Activated CD4-positive, alpha-beta T cell treated with anti-CD3 and anti-CD28 coated beads, Interleukin-2, amount 10 ng/mL, durations not matched to agents 24 days and 14 days (primary cell): ENCODE measurements at regions of chr12 and their contacts with region 1.

Region 1: DNA sequence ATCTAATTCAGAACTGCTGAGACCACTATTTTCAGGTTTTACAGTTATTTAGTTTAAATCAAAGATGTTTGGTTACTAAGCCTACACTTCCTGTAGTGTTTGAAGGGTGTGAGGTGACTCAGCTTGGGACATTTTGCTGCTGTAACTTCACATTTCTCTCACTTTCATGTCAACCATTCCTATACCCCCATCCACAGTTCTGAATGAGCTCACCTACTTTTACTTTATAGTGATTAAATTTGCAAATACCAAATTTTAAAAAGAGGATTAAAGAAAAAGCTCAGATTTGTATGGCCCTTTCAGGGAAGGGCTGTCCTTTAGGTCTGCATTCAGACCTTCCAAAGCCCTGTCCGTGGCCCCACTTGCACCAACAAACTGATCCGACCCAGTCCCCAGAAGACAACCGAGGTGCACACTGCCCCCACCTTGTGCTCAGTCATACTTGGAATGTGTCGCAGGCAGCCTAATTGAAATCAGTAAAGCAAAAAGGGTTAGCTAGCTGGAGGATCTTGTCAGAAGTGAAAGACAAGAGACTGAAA is 174.4 kb downstream of the MON2 start:
- DNase-seq: peak; percentile 70
- H3K4me3 Mint-ChIP-seq: peak overlapping the region; percentile 24
- H3K27ac Mint-ChIP-seq: peak overlapping the region; percentile 83
- H3K4me1 Mint-ChIP-seq: peaks cover 10% of the 10 kb centered on the region
- H3K27me3 Mint-ChIP-seq: peaks cover 15% of the 10 kb centered on the region

Region 2: GRCh38 chr12:62466594-62467491 is 174.1 kb before region 1 on chr12 and contains the start of gene MON2:
- intact Hi-C with region 1: loop called (anchors 1 kb)
- DNase-seq: peak; percentile 97
- H3K4me3 Mint-ChIP-seq: peak within 1 kb of the TSS; percentile 86
- H3K27ac Mint-ChIP-seq: peak within 1 kb of the TSS; percentile 93
- H3K4me1 Mint-ChIP-seq: peaks cover 19% of the 10 kb centered on the region
- H3K27me3 Mint-ChIP-seq: peaks cover 8% of the 10 kb centered on the region
- total RNA-seq, gene MON2: 32.8 and 36.4 TPM in 2 replicates

Region 3: GRCh38 chr12:62744551-62744950 is 103.6 kb after region 1 on chr12:
- intact Hi-C with region 1: no loop called
- DNase-seq: no peak
- H3K4me3 Mint-ChIP-seq: no peak overlapping the region
- H3K27ac Mint-ChIP-seq: no peak overlapping the region
- H3K4me1 Mint-ChIP-seq: peaks cover 3% of the 10 kb centered on the region
- H3K27me3 Mint-ChIP-seq: peaks cover 6% of the 10 kb centered on the region